ENCODE measurements at regions of chr11 and their contacts with region 1.

Region 1: GRCh38 chr11:121249039-121249663 is 43.4 kb upstream of the SC5D start:
- DNase-seq: no peak
- H3K4me3 ChIP-seq: no peak overlapping the region
- H3K27ac ChIP-seq: no peak overlapping the region
- H3K4me1 ChIP-seq: no peaks in the 10 kb centered on the region
- H3K27me3 ChIP-seq: no peaks in the 10 kb centered on the region
- CTCF ChIP-seq: peak; percentile 48 to 92 (median 76)
- POLR2A ChIP-seq: no peak

Region 2: DNA sequence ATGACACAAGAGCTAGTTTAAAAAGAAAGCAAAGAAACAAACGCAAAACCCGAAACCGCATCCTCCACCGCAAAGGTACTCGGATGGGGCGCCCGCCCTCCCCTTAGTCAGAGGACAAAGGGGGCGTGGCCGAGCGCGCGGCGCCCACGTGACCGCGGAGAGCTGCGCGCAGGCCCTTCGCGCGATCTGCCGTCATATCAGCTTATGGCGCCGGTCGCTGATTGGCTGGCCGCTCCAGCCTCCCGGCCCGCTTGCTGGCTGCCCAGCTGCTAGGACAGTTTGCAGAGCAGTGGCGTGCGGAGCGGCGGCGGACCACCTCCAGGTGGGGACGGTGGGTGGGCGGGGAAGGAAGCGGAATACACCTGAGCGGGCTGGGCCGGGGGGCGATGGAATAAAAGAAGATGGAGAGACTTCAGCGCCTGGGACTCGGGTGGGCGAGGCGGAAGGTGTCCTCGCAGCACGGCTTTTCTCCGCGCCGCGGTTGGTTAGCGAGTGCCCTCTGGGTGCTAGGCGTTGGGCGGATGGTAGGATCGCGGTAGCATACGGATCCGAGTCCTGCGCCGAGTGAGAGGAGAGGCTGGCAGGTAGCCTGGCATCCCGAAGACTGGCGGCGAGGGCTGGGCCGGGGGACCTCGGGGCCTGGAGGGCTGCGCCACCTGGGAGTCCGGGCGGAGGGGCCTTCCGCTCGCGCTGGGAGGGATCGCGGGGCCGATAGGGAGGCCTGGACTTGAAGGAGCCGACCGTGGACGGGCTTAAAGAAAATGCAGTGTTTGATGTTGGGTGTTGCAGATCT is 43.5 kb after region 1 on chr11 and contains the start of gene SC5D:
- intact Hi-C with region 1: loop called (anchors 2 kb)
- DNase-seq: peak; percentile 98
- H3K4me3 ChIP-seq: peak within 1 kb of the TSS; percentile 73 to 89
- H3K27ac ChIP-seq: peak within 1 kb of the TSS; percentile 93 to 99
- H3K4me1 ChIP-seq: no peaks in the 10 kb centered on the region
- H3K27me3 ChIP-seq: no peaks in the 10 kb centered on the region
- CTCF ChIP-seq: peak in 2 of 4 experiments; percentile 2 to 33
- POLR2A ChIP-seq: peak; percentile 97
- total RNA-seq, gene SC5D: 61.6 to 86.6 TPM

Region 3: DNA sequence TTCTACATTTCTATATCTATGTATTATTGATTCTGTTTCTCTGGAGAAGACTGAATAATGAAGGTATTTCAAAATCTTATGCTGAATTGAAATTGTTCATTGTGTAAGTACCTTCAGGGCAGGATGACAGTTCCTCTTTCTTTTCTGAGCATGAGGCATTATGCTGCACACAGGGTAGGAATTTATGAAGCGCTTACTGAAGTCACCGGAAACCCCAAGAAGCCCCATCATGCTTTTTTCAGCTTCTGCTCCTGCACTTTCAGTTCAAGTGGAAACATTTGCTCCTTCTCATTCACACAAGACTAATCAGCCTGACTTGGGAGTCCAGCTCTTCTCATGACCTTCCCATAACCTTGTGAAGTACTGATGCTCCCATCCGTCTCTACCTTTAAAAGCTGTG is 518.3 kb after region 1 on chr11:
- intact Hi-C with region 1: no loop called
- DNase-seq: no peak
- H3K4me3 ChIP-seq: no peak overlapping the region
- H3K27ac ChIP-seq: no peak overlapping the region
- H3K4me1 ChIP-seq: no peaks in the 10 kb centered on the region
- H3K27me3 ChIP-seq: no peaks in the 10 kb centered on the region
- CTCF ChIP-seq: no peak
- POLR2A ChIP-seq: no peak

Measured in prostate gland (tissue), 2 donors.